Ascending aorta (tissue), 2 donors: ENCODE measurements at regions of chr4 and their contacts with region 1.

Region 1: DNA sequence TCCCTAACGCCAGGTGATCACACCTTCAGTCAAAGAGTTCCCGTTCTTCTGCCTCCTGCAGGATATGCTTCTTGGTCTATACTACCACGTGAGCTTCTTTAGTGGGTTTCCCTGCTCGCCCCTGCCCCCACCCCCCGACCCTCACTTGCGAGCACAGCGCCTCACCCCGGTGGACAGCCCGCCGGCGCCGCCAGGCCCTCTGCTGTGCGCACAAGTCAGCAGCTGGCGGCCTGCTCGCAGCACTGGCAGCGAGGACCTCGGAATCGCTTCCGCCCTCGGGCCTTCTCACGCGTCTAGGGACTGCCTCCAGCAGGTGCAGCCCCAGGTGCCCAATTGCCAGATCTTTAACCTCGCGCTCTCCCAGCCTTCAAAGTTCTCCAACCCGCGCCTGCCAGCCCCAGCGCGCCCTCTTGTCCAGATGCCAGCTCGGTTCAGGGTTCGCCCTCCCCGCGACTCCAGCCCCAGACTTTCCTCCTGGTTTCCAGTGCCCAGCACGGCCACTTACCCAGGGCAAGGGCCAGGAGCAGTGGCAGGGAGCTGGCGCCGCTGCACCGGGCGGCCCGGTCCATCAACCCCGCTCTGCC is 474 bp downstream of the BTC start:
- DNase-seq: peak in 1 of 2 donors; percentile 72
- H3K4me3 ChIP-seq: peak overlapping the region; percentile 72 to 84
- H3K27ac ChIP-seq: peak overlapping the region; percentile 88 to 96
- H3K4me1 ChIP-seq: peaks cover 0 to 10% of the 10 kb centered on the region in 2 donors
- H3K27me3 ChIP-seq: no peaks in the 10 kb centered on the region
- CTCF ChIP-seq: peak; percentile 7 to 70 (median 55)

Region 2: GRCh38 chr4:74682567-74683359 is 111.1 kb before region 1 on chr4:
- intact Hi-C with region 1: loop called (anchors 5 kb)
- DNase-seq: peak; percentile 27 to 74
- H3K4me3 ChIP-seq: no peak overlapping the region
- H3K27ac ChIP-seq: peak overlapping the region in 1 of 2 donors; percentile 47
- H3K4me1 ChIP-seq: peaks cover 4 to 20% of the 10 kb centered on the region in 2 donors
- H3K27me3 ChIP-seq: no peaks in the 10 kb centered on the region
- CTCF ChIP-seq: no peak

Region 3: DNA sequence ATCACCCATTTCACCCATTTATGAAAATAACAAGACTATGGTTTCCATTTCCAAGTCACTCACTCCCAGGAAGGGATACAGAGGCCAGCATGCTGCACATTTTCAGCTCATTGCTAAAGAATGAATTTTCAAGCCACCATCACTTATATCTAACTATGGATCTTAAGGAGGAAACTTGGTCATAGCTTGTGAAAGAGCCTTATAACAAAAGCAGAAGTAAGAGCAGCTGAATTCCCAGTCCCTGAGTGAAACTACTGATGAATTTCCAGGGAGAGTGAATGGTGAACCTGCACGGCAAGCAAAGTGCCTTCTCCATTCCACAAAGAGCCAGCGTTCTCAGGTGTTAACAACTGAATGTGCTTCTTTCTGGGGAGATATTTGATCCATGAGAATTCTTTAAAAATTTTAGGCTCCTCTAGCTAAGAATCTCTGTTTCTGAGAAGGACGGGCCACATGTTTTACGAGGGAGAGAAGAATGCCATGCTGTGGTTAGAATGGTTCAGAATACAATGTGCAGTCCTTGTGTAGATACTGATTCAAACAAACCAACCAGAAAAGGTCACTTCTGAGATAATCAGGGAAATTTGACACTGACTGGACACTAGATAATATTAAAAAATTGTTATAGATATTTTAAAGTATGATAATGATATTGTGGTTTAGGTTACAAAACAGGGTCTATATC is 23.5 kb before region 1 on chr4:
- intact Hi-C with region 1: loop called (anchors 2 kb)
- DNase-seq: no peak
- H3K4me3 ChIP-seq: no peak overlapping the region
- H3K27ac ChIP-seq: peak overlapping the region; percentile 24 to 35
- H3K4me1 ChIP-seq: peaks cover 0 to 6% of the 10 kb centered on the region in 2 donors
- H3K27me3 ChIP-seq: no peaks in the 10 kb centered on the region
- CTCF ChIP-seq: no peak